Naive thymus-derived CD4-positive, alpha-beta T cell (primary cell): ENCODE measurements at regions of chr7 and their contacts with region 1.

Region 1: GRCh38 chr7:123724817-123725253 is 24.0 kb downstream of the WASL start:
- DNase-seq: no peak
- ATAC-seq: no peak
- H3K4me3 ChIP-seq: no peak overlapping the region
- H3K4me3 Mint-ChIP-seq: peak overlapping the region in 3 of 10 donors; percentile 18 to 48 (median 27)
- H3K27ac ChIP-seq: no peak overlapping the region
- H3K27ac Mint-ChIP-seq: no peak overlapping the region
- H3K4me1 ChIP-seq: peaks cover 12 to 18% of the 10 kb centered on the region in 2 donors
- H3K4me1 Mint-ChIP-seq: peaks cover 21 to 91% (median 74%) of the 10 kb centered on the region in 7 donors
- H3K27me3 ChIP-seq: no peaks in the 10 kb centered on the region
- H3K27me3 Mint-ChIP-seq: no peaks in the 10 kb centered on the region

Region 2: DNA sequence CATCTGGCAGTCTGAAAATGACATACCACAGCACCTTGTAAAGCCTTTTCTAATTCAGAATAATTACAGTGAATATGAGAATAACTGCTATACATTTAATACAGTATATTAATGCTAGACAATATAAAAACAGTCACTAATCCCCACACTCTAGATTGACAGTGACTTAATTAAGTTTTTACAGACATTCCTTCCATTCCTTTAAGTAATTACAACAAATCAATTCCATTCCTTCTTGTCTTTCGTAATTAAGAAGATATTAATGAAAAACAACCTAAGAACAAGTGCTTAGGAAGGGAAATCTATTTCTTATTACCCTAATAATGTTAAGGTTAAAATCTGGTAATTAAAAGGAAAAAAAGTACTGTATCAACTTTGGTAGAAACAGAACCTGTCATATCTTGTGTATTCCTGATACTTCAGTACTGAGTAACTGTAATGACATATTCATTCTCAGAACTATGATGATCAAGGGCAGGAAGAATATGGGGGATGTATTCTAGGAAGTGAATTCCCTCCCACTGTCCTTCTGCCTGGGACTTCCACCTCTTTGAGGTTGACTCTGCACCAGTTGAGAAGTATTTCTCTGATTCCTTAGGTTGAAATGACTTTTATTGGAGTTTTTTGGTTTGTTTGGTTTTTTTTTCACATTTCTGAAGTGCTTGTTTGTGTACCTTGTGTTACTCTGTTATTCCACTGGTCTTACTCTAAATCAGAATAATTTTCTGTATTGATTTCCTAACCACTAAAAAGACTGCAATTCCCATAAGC is 13.1 kb before region 1 on chr7:
- CTCF ChIA-PET with region 1: no interaction called
- POLR2A ChIA-PET with region 1: no interaction called
- intact Hi-C with region 1: loop called in 1 of 2 experiments (anchors 2 kb)
- DNase-seq: no peak
- ATAC-seq: no peak
- H3K4me3 ChIP-seq: no peak overlapping the region
- H3K4me3 Mint-ChIP-seq: peak overlapping the region in 7 of 10 donors; percentile 1 to 81 (median 37)
- H3K27ac ChIP-seq: no peak overlapping the region
- H3K27ac Mint-ChIP-seq: peak overlapping the region in 6 of 9 donors; percentile 3 to 82 (median 36)
- H3K4me1 ChIP-seq: peaks cover 0 to 27% of the 10 kb centered on the region in 2 donors
- H3K4me1 Mint-ChIP-seq: peaks cover 34 to 63% (median 60%) of the 10 kb centered on the region in 7 donors
- H3K27me3 ChIP-seq: no peaks in the 10 kb centered on the region
- H3K27me3 Mint-ChIP-seq: no peaks in the 10 kb centered on the region

Region 3: GRCh38 chr7:123916240-123916724 is 191.4 kb after region 1 on chr7:
- CTCF ChIA-PET with region 1: no interaction called
- POLR2A ChIA-PET with region 1: no interaction called
- intact Hi-C with region 1: no loop called
- DNase-seq: no peak
- ATAC-seq: no peak
- H3K4me3 ChIP-seq: no peak overlapping the region
- H3K4me3 Mint-ChIP-seq: no peak overlapping the region
- H3K27ac ChIP-seq: no peak overlapping the region
- H3K27ac Mint-ChIP-seq: no peak overlapping the region
- H3K4me1 ChIP-seq: no peaks in the 10 kb centered on the region
- H3K4me1 Mint-ChIP-seq: no peaks in the 10 kb centered on the region
- H3K27me3 ChIP-seq: no peaks in the 10 kb centered on the region
- H3K27me3 Mint-ChIP-seq: peaks cover 0 to 9% (median 4%) of the 10 kb centered on the region in 5 donors